ENCODE measurements at regions of chr12 and their contacts with region 1.

Region 1: DNA sequence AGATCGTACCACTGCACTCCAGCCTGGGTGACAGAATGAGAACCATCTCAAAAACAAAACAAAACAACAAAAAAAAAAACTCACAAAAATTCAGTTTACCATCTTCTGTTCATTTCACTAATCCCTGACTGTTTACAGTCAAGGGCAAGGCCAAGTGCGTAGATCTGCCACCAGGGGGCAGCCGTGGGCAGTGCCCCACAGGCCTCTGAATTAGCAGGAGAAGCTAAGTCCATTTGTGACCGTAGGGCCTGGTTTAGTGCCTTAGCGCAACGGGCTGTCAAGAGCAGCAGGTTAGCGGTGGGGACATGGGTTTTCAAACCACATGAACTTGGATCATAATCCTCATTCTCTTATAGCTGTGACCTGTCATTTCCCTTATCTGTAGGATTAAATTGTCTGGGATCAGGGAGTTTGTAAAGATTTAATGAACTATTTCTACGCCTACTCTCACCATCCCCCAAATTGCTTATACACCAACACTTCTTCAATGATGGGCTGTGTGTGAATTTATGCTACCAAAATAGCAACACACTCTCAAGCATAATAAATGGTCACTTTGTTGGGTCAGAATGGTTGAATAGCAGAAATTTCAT is 49.0 kb downstream of the KCTD10 start:
- DNase-seq: peak; percentile 82
- ATAC-seq: peak; percentile 93

Region 2: GRCh38 chr12:108896366-108897216 is 531.5 kb before region 1 on chr12:
- intact Hi-C with region 1: no loop called
- DNase-seq: no peak
- ATAC-seq: no peak

Region 3: DNA sequence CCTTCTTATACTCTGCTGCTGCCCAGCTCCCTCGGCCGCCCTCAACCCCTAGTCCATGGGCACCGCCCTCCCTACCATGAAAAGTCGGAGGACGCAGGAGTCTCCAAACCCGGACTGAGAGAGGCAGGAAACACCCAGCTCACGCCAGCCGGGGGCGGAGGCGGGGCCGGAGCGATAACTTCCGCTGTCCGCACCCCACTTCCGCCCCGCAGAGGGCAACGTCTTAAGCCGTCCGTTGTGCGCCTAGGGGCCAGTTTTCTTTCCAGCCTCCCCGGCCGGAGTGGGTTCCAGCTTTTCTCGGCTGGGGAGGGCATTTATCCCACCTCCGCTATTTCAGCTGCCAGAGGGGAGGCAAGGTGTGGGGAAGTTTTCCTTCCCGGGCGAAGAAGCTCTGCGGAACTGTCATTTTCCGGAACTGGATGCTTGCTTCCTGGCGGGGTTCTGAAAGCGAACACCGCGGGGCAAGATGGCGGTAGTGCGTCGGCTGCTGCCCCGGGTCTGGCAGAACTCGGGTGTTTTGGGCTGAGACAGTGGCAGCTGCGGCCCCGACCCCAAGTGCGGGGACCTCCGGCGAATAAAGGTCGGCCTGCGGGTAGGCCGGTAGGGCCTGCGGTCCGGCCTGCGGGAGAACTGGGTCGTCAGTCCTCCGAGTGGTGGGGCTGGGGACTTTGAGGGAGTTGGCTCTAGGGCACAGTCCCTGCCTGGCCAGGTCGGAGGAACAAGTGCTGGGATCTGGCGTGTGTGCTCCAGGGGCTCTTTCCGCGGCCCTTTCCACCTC is 49.2 kb after region 1 on chr12 and contains the starts of genes KCTD10 and UBE3B:
- intact Hi-C with region 1: loop called (anchors 2 to 10 kb)
- DNase-seq: peak; percentile 92
- ATAC-seq: peak; percentile 99
- total RNA-seq, gene KCTD10: 36.2 to 96.5 TPM
- total RNA-seq, gene UBE3B: 40.4 to 54.8 TPM

Region 4: GRCh38 chr12:109518820-109519665 is 90.9 kb after region 1 on chr12:
- intact Hi-C with region 1: loop called in 1 of 2 experiments (anchors 5 kb)
- DNase-seq: peak; percentile 69
- ATAC-seq: peak; percentile 50 to 60

Region 5: GRCh38 chr12:109597795-109598427 is 169.8 kb after region 1 on chr12:
- intact Hi-C with region 1: loop called in 1 of 2 experiments (anchors 10 kb)
- DNase-seq: peak; percentile 90
- ATAC-seq: peak; percentile 94 to 95